Lower lobe of right lung (tissue), 2 donors: ENCODE measurements at regions of chr9 and their contacts with region 1.

Region 1: DNA sequence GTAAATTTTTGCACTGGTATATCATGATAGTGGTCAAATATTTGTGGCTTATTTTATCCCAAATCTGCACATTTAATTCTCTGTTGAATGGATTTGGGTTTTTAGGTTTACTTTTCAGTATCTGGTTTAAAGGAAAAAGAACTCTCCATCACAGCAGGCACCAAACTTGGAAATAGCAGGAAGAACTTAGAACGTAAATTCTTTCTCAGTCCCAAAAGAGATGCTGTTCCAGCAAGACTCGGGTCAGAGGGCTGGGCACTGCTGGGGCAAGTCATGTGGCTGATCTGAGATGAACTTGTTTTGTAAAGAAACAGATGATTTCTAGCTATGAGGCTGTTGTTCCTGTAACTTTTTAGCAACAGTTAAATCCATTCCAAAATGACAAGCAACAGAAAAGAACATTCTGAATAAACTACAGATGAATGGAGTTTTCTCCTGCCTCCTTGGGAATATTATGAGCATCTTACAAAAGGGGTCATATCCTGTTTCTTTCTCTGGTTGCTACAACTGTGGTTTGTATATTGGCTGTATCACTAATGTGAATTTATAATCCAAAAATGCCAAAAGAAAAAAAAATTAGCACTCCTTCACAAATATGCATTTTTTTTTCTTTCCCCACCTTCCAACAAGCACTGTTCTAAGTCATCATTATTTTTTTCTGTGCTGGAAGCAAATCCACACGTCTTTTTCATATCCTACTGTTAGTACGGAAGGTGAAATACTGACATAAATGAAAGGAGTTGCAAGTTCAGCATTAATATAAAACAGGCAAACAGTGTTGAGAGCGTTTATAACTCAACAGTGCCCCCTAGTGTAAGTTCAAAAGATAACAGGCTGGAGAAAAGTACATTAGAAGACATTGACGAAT is 31.1 kb downstream of the OR2K2 start:
- DNase-seq: no peak
- ATAC-seq: peak; percentile 81 to 83
- H3K4me3 ChIP-seq: no peak overlapping the region
- H3K27ac ChIP-seq: no peak overlapping the region
- H3K4me1 ChIP-seq: no peaks in the 10 kb centered on the region
- H3K27me3 ChIP-seq: no peaks in the 10 kb centered on the region
- CTCF ChIP-seq: peak; percentile 75

Region 2: DNA sequence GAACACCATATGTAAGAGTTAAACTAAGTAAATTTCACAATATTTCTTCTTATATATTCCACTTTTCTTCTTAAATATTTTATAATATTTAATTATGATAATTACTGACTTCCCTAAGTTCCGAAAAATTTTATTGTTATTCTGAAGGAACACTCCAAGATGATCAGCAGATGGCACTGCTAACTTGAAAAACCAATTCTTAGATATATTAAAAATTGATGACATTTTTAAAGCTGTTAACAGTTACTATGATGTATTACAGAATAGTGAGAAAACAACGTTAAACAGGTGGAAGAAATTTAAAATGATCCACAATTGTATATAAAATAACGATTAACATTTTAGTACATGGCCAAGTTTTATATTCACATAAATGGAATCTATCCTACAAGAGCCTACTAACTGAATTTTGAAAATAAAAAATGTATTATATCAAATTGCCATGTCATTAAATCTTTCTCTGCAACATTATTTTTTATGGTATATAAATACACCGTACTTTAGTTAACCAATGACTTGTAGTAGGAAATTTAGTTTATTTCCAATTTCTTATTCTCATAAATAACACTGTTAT is 660.5 kb before region 1 on chr9:
- intact Hi-C with region 1: loop called (anchors 10 kb)
- DNase-seq: no peak
- ATAC-seq: no peak
- H3K4me3 ChIP-seq: no peak overlapping the region
- H3K27ac ChIP-seq: no peak overlapping the region
- H3K4me1 ChIP-seq: no peaks in the 10 kb centered on the region
- H3K27me3 ChIP-seq: no peaks in the 10 kb centered on the region
- CTCF ChIP-seq: peak; percentile 44